PC-3 (cell line): ENCODE measurements at regions of chr5 and their contacts with region 1.

Region 1: GRCh38 chr5:64612344-64612961 is 77.8 kb upstream of the SHISAL2B start:
- DNase-seq: peak; percentile 82
- ATAC-seq: peak; percentile 85
- H3K4me3 ChIP-seq: no peak overlapping the region
- H3K27ac ChIP-seq: no peak overlapping the region
- H3K4me1 ChIP-seq: no peaks in the 10 kb centered on the region
- H3K27me3 ChIP-seq: no peaks in the 10 kb centered on the region
- CTCF ChIP-seq: peak; percentile 89

Region 2: GRCh38 chr5:64074533-64074932 is 537.9 kb before region 1 on chr5:
- CTCF ChIA-PET with region 1: no interaction called
- POLR2A ChIA-PET with region 1: no interaction called
- intact Hi-C with region 1: loop called (anchors 10 kb)
- DNase-seq: peak; percentile 76
- ATAC-seq: peak; percentile 84
- H3K4me3 ChIP-seq: no peak overlapping the region
- H3K27ac ChIP-seq: no peak overlapping the region
- H3K4me1 ChIP-seq: peaks cover 2% of the 10 kb centered on the region; the same call in 1 of the 2 replicates
- H3K27me3 ChIP-seq: no peaks in the 10 kb centered on the region
- CTCF ChIP-seq: peak; percentile 82

Region 3: DNA sequence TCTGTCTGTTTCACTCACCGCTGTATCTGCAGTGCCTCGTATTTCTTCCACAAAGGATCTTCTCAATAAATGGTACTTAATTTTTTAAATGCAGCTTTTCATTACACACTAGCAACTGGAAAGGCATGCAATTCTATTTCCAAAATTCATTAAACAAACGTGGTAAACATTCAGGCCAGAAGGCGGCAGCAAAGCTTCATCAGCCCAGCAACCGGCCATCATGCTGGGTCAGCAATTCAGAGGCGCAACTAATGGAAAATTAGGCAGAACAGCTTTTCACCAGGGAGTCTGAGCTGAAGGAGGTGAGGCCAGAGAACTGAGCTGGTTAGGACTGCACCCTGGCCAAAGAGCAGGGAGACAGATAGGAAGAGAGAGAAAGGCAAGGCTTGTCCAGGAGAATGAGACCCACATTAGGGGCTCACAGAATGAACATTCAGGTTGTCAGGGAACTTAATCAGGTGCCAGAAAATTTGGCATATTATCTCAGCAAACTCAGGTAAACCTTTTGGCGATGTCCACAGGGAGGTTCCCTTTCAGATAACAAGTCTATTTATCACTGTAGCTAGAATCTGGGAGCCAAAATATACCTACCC is 464.5 kb before region 1 on chr5:
- CTCF ChIA-PET with region 1: no interaction called
- POLR2A ChIA-PET with region 1: no interaction called
- intact Hi-C with region 1: loop called (anchors 5 kb)
- DNase-seq: peak; percentile 71
- ATAC-seq: peak; percentile 44
- H3K4me3 ChIP-seq: no peak overlapping the region
- H3K27ac ChIP-seq: no peak overlapping the region
- H3K4me1 ChIP-seq: peaks cover 18% of the 10 kb centered on the region
- H3K27me3 ChIP-seq: no peaks in the 10 kb centered on the region
- CTCF ChIP-seq: peak; percentile 93

Region 4: DNA sequence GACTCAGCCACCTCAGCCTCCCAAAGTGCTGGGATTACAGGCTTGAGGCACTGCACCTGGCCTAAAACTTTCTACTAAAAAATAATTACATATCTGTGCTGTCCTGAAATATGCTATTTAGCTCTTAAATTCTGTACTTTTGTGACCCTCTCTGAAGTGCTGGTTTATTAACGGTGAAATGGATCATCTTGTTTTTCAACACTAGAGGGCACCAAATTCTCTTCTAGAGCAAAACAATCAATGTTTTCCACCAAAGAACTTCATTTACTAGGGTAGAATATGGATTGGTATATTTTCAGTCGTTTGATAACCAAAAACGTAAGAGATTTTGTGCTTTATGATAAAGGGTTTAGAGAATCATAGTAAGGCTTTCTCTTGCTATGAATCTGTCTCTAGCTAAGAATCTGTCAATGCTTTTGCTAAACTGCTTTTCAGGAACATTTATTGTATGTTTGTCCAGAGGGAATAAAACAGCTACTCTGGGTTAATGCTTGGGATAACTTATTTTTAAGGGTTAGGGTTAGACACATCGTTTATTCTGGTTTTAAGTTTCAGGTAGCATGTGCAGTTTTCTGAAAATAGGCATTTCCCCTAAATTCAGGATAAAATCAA is 383.2 kb before region 1 on chr5:
- CTCF ChIA-PET with region 1: interaction called, 16 read pairs
- POLR2A ChIA-PET with region 1: no interaction called
- intact Hi-C with region 1: loop called (anchors 1 kb)
- DNase-seq: peak; percentile 76
- ATAC-seq: peak; percentile 70
- H3K4me3 ChIP-seq: no peak overlapping the region
- H3K27ac ChIP-seq: no peak overlapping the region
- H3K4me1 ChIP-seq: no peaks in the 10 kb centered on the region
- H3K27me3 ChIP-seq: no peaks in the 10 kb centered on the region
- CTCF ChIP-seq: peak; percentile 88

Region 5: DNA sequence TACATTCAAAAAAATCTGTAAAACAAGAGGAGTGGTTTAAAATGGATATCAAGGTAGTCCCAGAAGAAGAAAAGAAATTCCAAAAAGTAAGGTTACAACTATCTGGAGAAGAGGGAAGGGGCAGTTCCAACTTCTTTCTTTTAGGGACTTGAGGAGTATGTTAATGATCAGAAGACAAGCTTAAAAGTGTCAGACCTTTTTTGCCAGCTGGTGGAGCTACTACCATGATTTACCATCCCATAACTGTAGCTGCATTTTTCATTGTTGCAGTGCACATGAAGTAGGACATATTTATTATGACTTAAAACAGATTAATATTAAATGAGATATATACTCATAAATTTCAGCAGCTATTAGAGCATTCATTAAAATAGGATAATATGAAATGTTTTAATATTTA is 265.1 kb before region 1 on chr5:
- CTCF ChIA-PET with region 1: interaction called, 12 read pairs
- POLR2A ChIA-PET with region 1: no interaction called
- intact Hi-C with region 1: loop called (anchors 1 kb)
- DNase-seq: peak; percentile 43
- ATAC-seq: peak; percentile 67
- H3K4me3 ChIP-seq: no peak overlapping the region
- H3K27ac ChIP-seq: no peak overlapping the region
- H3K4me1 ChIP-seq: no peaks in the 10 kb centered on the region
- H3K27me3 ChIP-seq: no peaks in the 10 kb centered on the region
- CTCF ChIP-seq: peak; percentile 49

Region 6: DNA sequence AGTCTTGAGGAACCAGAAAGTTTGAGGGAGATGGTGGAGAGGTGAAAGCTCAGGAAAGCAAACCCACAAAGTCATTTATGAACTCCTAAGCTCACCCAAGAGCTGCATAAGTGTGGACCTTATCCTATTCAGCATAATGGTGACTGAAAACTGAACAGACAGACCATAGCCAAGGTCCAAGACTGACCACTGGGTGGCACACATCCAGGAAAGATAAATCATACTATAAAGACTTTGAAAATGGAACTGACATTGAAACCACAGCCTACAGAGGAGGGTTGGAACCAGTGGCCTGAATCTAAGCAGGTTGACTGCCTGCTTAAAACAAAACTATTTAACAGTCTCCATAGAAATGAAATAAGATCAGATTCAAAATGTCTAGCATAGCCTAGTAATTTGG is 227.7 kb before region 1 on chr5:
- CTCF ChIA-PET with region 1: interaction called, 3 read pairs
- POLR2A ChIA-PET with region 1: no interaction called
- intact Hi-C with region 1: loop called (anchors 1 kb)
- DNase-seq: peak; percentile 64
- ATAC-seq: peak; percentile 85
- H3K4me3 ChIP-seq: no peak overlapping the region
- H3K27ac ChIP-seq: no peak overlapping the region
- H3K4me1 ChIP-seq: no peaks in the 10 kb centered on the region
- H3K27me3 ChIP-seq: no peaks in the 10 kb centered on the region
- CTCF ChIP-seq: peak; percentile 65

Region 7: DNA sequence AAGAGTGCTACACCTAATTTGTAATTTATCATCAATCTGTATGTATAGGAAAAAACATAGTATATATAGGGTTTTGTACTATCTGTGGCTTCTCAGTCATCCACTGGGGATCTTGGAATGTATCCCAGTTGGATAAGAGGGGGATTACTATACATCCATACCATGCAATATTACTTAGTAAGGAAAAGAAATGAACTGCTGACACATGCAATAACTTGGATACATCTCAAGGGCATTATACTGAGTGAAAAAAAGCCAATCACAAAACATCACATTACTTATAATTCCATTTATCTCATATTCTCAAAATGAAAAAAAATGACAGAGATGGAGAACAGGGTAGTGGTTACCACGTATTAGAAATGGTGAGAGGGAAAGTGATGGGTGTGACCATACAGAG is 214.9 kb before region 1 on chr5:
- CTCF ChIA-PET with region 1: no interaction called
- POLR2A ChIA-PET with region 1: no interaction called
- intact Hi-C with region 1: no loop called
- DNase-seq: no peak
- ATAC-seq: no peak
- H3K4me3 ChIP-seq: no peak overlapping the region
- H3K27ac ChIP-seq: no peak overlapping the region
- H3K4me1 ChIP-seq: no peaks in the 10 kb centered on the region
- H3K27me3 ChIP-seq: no peaks in the 10 kb centered on the region
- CTCF ChIP-seq: no peak

Region 8: DNA sequence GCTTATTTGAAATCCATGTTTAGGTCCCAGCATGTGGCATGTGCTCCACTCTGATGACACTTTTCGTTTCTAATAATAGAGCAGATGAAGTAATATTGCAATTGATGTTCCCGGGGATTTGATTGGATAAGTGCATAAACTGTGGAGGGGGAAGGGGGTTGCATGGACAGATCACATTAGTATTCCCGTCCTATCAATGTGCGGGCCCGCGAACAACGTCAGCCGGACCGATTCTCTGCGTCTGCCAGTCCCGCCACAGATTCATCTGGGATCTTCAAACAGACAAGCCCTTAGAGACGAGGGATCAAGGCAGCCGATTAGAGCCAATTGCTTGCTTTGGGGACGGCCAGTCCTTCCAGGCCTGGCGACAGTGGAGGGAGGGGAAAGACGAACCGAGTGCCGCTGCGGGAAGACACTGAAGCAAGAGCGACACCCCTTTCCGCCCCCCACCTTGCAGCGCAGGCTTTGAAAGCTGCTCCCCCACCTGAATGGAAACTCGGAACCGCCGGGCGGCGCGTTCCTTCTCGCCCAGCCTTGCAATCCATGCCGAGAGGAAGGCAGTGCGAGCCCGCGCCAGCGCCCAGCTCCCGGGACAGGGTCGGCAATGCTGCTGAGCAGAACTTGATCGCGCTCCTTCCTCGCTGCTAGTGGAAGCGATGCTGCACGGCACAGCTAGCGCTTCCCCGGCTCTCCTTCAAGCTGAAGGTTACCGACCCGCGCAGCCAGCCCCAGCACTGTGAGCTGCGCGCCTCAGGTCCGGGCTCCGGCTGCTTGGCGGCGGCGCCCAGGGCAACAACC is 106.5 kb before region 1 on chr5 and contains the start of gene RGS7BP:
- CTCF ChIA-PET with region 1: no interaction called
- POLR2A ChIA-PET with region 1: no interaction called
- intact Hi-C with region 1: loop called (anchors 1 kb)
- DNase-seq: peak; percentile 52
- ATAC-seq: peak; percentile 93
- H3K4me3 ChIP-seq: peak within 1 kb of the TSS; percentile 82
- H3K27ac ChIP-seq: no peak within 1 kb of the TSS
- H3K4me1 ChIP-seq: no peaks in the 10 kb centered on the region; the same call in 1 of the 2 replicates
- H3K27me3 ChIP-seq: no peaks in the 10 kb centered on the region
- CTCF ChIP-seq: no peak
- total RNA-seq, gene RGS7BP: 1.2 and 2.1 TPM in 2 replicates